HCT116 (cell line): ENCODE measurements at regions of chr10 and their contacts with region 1.

Region 1: DNA sequence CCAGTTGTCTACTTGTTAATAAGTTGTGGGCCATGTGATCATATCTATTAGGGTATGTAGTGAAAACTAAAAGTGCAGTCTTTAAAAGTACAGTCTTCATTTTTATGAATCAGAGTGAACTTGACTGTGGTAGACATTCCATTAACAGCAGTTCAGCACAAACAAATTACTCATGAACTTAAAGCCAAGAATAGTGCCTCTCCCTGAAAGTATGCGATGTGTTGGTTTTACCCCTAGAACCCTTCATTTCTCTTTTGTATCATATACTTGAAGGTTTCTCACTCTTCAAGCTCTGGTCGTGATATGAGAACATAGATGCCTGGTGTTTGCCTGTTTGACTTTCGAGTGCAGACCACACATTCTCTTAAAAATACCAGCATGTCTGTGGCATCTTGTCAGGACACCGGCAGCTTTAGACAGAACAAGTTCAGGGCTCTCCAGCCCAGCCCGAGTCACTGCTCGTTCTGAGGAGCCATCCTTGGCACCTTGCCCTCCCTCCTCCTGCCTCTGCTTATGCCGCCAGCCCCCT is 159.3 kb downstream of the LCOR start:
- DNase-seq: no peak
- ATAC-seq: no peak
- H3K4me3 ChIP-seq: no peak overlapping the region
- H3K27ac ChIP-seq: no peak overlapping the region
- H3K4me1 ChIP-seq: no peaks in the 10 kb centered on the region
- H3K27me3 ChIP-seq: no peaks in the 10 kb centered on the region
- CTCF ChIP-seq: no peak
- POLR2A ChIP-seq: no peak
- RAD21 ChIP-seq: no peak

Region 2: GRCh38 chr10:96935810-96936209 is 55.6 kb before region 1 on chr10:
- CTCF ChIA-PET with region 1: no interaction called
- POLR2A ChIA-PET with region 1: no interaction called
- RAD21 ChIA-PET with region 1: no interaction called
- intact Hi-C with region 1: loop called (anchors 2 kb)
- DNase-seq: no peak
- ATAC-seq: no peak
- H3K4me3 ChIP-seq: no peak overlapping the region
- H3K27ac ChIP-seq: no peak overlapping the region
- H3K4me1 ChIP-seq: no peaks in the 10 kb centered on the region
- H3K27me3 ChIP-seq: no peaks in the 10 kb centered on the region
- CTCF ChIP-seq: no peak
- POLR2A ChIP-seq: no peak
- RAD21 ChIP-seq: no peak

Region 3: GRCh38 chr10:97072851-97073665 is 81.7 kb after region 1 on chr10:
- CTCF ChIA-PET with region 1: no interaction called
- POLR2A ChIA-PET with region 1: no interaction called
- RAD21 ChIA-PET with region 1: no interaction called
- intact Hi-C with region 1: no loop called
- DNase-seq: peak; percentile 56
- ATAC-seq: peak; percentile 91
- H3K4me3 ChIP-seq: no peak overlapping the region
- H3K27ac ChIP-seq: no peak overlapping the region
- H3K4me1 ChIP-seq: peaks cover 0 to 10% of the 10 kb centered on the region in 2 experiments; a peak in 2 of 4 replicates
- H3K27me3 ChIP-seq: peaks cover 24% of the 10 kb centered on the region
- CTCF ChIP-seq: peak; percentile 89 to 94 (median 93)
- POLR2A ChIP-seq: no peak
- RAD21 ChIP-seq: peak; percentile 93

Region 4: DNA sequence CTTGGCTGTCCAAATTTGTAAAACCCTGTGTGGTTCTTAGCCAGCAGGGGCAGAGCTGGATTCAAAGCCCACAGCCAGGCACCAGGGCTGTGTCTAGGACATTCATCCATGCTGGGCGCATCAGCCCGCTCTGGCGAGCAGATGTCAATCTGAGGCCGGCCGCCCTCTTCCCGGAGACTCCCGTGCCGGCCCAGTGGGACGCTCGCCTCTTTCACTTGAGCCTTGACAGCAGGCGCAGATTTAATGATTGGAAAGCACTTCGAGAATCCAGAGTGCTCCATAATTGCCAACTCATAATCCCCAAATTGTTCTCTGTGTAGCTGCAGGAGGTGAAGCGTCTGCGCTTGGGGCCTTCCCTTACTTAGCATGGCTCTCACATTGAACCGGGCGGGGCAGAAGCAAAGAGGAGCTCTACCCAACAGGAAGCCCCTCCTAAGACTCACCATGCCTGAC is 157.7 kb after region 1 on chr10:
- CTCF ChIA-PET with region 1: no interaction called
- POLR2A ChIA-PET with region 1: no interaction called
- RAD21 ChIA-PET with region 1: no interaction called
- intact Hi-C with region 1: no loop called
- DNase-seq: no peak
- ATAC-seq: no peak
- H3K4me3 ChIP-seq: no peak overlapping the region
- H3K27ac ChIP-seq: no peak overlapping the region
- H3K4me1 ChIP-seq: no peaks in the 10 kb centered on the region
- H3K27me3 ChIP-seq: peaks cover 13% of the 10 kb centered on the region
- CTCF ChIP-seq: no peak
- POLR2A ChIP-seq: no peak
- RAD21 ChIP-seq: no peak